ENCODE measurements at regions of chr20 and their contacts with region 1.

Region 1: DNA sequence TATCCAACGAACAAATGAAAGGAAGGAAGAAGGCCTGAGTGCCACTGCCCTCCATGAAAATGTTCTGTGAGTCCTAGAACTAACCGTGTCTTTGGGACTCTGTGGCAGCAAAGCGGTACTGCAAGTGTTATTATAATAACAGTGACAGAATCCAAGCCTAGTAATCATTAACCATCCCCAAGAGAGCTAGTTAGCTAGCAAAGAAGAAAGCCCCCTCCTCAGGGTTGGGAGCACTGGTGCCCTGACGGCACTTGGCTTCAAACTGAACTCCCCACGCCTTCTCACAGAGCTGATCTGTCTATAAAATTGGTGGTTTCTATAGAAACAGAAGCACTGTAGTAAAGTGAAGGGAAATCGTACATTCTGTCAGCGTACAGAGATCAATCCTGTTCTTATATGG is 239.8 kb downstream of the PTPRT start:
- DNase-seq: no peak
- H3K4me3 ChIP-seq: no peak overlapping the region
- H3K27ac ChIP-seq: no peak overlapping the region
- H3K4me1 ChIP-seq: no peaks in the 10 kb centered on the region
- H3K27me3 ChIP-seq: 0 out of 2 replicates have a peak, but pooled peaks cover under 1% of the 10 kb centered on the region
- CTCF ChIP-seq: no peak

Region 2: GRCh38 chr20:41200446-41201202 is 1749.3 kb before region 1 on chr20:
- CTCF ChIA-PET with region 1: interaction called, 10 read pairs
- POLR2A ChIA-PET with region 1: no interaction called
- intact Hi-C with region 1: no loop called
- DNase-seq: no peak
- H3K4me3 ChIP-seq: no peak overlapping the region
- H3K27ac ChIP-seq: no peak overlapping the region
- H3K4me1 ChIP-seq: no peaks in the 10 kb centered on the region
- H3K27me3 ChIP-seq: no peaks in the 10 kb centered on the region
- CTCF ChIP-seq: no peak